Activated CD4-positive, alpha-beta T cell treated with anti-CD3 and anti-CD28 coated beads, Interleukin-2, amount 10 ng/mL, durations not matched to agents 24 days and 14 days (primary cell): ENCODE measurements at regions of chr12 and their contacts with region 1.

Region 1: DNA sequence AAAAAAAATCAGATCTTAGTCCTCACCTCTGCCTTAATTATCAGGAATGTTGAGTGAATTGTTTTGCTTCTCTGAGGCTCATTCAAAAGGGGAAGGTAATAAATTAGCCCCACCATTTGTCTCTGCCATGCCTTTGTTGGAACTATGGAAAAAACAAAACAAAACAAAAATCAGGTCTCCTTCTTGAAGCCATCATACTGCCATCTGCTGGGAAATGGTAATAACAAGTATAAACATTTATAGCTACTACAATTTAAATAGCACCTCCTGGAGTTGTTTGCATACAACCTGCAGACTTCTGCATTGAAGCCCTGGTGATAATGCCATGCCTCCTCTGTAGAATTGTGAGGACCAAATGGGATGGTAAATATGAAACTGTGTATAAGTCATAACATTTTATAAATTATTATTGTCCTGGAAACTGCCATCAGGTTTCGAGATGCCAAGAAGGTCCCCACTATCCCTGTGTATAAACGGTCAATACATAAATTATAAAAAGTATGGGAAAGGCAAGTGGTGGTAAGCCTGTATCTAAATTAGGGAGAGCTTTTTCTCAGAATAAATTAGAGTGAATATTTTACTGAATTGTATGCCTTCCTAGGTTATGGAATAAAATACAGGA is 87.2 kb upstream of the FGD4 start:
- DNase-seq: peak; percentile 63
- H3K4me3 Mint-ChIP-seq: no peak overlapping the region
- H3K27ac Mint-ChIP-seq: no peak overlapping the region
- H3K4me1 Mint-ChIP-seq: peaks cover 3% of the 10 kb centered on the region
- H3K27me3 Mint-ChIP-seq: peaks cover 2% of the 10 kb centered on the region

Region 2: GRCh38 chr12:31117203-31118011 is 1194.8 kb before region 1 on chr12:
- intact Hi-C with region 1: no loop called
- DNase-seq: peak; percentile 86
- H3K4me3 Mint-ChIP-seq: peak overlapping the region; percentile 77
- H3K27ac Mint-ChIP-seq: peak overlapping the region; percentile 15
- H3K4me1 Mint-ChIP-seq: peaks cover 2% of the 10 kb centered on the region
- H3K27me3 Mint-ChIP-seq: peaks cover 30% of the 10 kb centered on the region

Region 3: GRCh38 chr12:31406345-31406744 is 905.8 kb before region 1 on chr12:
- intact Hi-C with region 1: loop called (anchors 10 kb)
- DNase-seq: no peak
- H3K4me3 Mint-ChIP-seq: no peak overlapping the region
- H3K27ac Mint-ChIP-seq: no peak overlapping the region
- H3K4me1 Mint-ChIP-seq: peaks cover 3% of the 10 kb centered on the region
- H3K27me3 Mint-ChIP-seq: peaks cover 7% of the 10 kb centered on the region

Region 4: GRCh38 chr12:31682136-31682962 is 629.8 kb before region 1 on chr12:
- intact Hi-C with region 1: loop called (anchors 1 kb)
- DNase-seq: peak; percentile 91
- H3K4me3 Mint-ChIP-seq: no peak overlapping the region
- H3K27ac Mint-ChIP-seq: peak overlapping the region; percentile 54
- H3K4me1 Mint-ChIP-seq: peaks cover 10% of the 10 kb centered on the region
- H3K27me3 Mint-ChIP-seq: no peaks in the 10 kb centered on the region

Region 5: GRCh38 chr12:32062881-32063280 is 249.3 kb before region 1 on chr12:
- intact Hi-C with region 1: loop called (anchors 1 kb)
- DNase-seq: no peak
- H3K4me3 Mint-ChIP-seq: no peak overlapping the region
- H3K27ac Mint-ChIP-seq: no peak overlapping the region
- H3K4me1 Mint-ChIP-seq: peaks cover 11% of the 10 kb centered on the region
- H3K27me3 Mint-ChIP-seq: no peaks in the 10 kb centered on the region